GM12878 (cell line): ENCODE measurements at regions of chr10 and their contacts with region 1.

Region 1: DNA sequence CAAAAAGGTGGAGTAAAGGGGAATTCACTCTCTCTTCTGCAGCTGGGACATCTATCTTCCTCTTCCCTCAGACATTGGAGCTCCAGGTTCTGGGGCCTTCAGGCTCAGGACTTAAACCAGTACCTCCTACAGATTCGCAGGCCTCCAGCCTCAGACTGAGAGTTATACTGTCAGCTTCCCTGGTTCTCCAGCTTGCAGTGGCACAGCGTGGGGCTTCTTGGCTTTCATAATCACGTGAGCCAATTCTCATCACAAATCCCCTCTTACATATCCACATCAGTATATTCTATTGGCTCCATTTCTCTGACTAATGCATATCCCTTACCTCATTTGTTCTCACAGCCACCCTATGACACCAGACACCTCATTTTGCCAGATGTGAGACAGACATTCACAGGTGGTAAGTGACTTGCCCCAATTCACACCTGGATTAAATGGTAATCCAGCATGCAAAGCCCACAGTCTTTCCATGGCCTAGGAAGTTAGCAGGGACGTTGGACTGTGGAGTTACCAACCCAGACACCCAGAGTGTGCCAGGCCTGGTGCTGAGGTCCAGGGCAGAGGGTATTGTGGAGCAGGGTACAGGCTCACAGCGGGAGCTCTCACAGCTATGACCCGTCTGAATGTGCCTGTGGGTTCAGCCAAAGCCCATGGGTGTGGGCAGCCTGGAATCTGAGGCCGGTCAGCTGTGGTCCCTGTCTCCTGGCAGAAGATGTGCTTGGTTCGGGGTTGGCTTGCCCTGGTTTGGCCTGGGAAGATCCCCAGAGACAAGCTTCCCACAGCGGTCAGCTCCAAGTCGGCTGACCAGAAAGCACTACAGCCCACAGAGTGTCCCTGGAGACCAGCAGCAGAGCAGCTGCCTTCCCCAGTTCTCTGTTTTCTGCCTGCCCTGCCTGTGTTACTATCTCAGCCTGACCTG is 18.4 kb upstream of the ZCCHC24 start:
- DNase-seq: no peak
- ATAC-seq: peak; percentile 31; the same call in 1 of the 3 replicates
- H3K4me3 ChIP-seq: no peak overlapping the region
- H3K27ac ChIP-seq: no peak overlapping the region
- H3K4me1 ChIP-seq: no peaks in the 10 kb centered on the region
- H3K27me3 ChIP-seq: peaks cover 0 to 3% of the 10 kb centered on the region in 2 experiments; a peak in 2 of 4 replicates
- CTCF ChIP-seq: no peak
- EP300 ChIP-seq: no peak
- POLR2A ChIP-seq: no peak
- RAD21 ChIP-seq: no peak

Region 2: DNA sequence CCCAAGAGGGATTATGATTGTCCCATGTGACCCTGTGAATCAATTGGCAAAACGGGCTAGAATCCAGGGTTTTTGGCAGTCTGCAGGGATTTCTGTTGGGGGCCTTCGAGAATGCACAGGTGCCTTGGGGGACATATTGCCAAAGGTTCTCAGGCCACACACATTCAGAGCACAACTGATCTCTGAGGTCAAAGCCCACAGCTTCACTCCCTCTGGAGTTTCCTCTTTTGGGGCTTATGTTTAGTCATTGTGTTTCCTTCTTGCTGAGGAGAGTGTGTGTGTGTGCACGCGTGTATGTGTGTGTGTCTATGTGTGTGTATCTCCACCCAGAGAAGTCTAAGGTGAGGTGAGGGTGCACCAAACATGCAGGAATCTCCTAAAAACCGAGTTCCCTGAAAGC is 107.7 kb before region 1 on chr10:
- CTCF ChIA-PET with region 1: no interaction called
- POLR2A ChIA-PET with region 1: no interaction called
- RAD21 ChIA-PET with region 1: no interaction called
- SMC1A ChIA-PET with region 1: no interaction called
- in situ Hi-C with region 1: no loop called
- intact Hi-C with region 1: no loop called
- DNase-seq: no peak
- ATAC-seq: peak; percentile 33
- H3K4me3 ChIP-seq: no peak overlapping the region
- H3K27ac ChIP-seq: no peak overlapping the region
- H3K4me1 ChIP-seq: peaks cover 19% of the 10 kb centered on the region
- H3K27me3 ChIP-seq: no peaks in the 10 kb centered on the region
- CTCF ChIP-seq: no peak
- EP300 ChIP-seq: no peak
- POLR2A ChIP-seq: peak; percentile 30
- RAD21 ChIP-seq: no peak

Region 3: GRCh38 chr10:79390551-79391209 is 73.2 kb before region 1 on chr10:
- CTCF ChIA-PET with region 1: interaction called, 11 read pairs
- POLR2A ChIA-PET with region 1: no interaction called
- RAD21 ChIA-PET with region 1: no interaction called
- SMC1A ChIA-PET with region 1: interaction called, 3 read pairs
- in situ Hi-C with region 1: no loop called
- intact Hi-C with region 1: no loop called
- DNase-seq: no peak
- ATAC-seq: peak; percentile 13; the same call in 2 of the 3 replicates
- H3K4me3 ChIP-seq: no peak overlapping the region
- H3K27ac ChIP-seq: no peak overlapping the region
- H3K4me1 ChIP-seq: peaks cover 6% of the 10 kb centered on the region; the same call in 1 of the 2 replicates
- H3K27me3 ChIP-seq: no peaks in the 10 kb centered on the region; a peak in 1 of 4 replicates
- CTCF ChIP-seq: peak in 1 of 3 experiments; percentile 7; a peak in 1 of 6 replicates
- EP300 ChIP-seq: no peak
- POLR2A ChIP-seq: no peak
- RAD21 ChIP-seq: no peak

Region 4: GRCh38 chr10:79400146-79401004 is 63.5 kb before region 1 on chr10:
- CTCF ChIA-PET with region 1: interaction called, 5 read pairs
- POLR2A ChIA-PET with region 1: no interaction called
- RAD21 ChIA-PET with region 1: no interaction called
- SMC1A ChIA-PET with region 1: no interaction called
- in situ Hi-C with region 1: no loop called
- intact Hi-C with region 1: loop called (anchors 1 kb)
- DNase-seq: no peak
- ATAC-seq: peak; percentile 94
- H3K4me3 ChIP-seq: no peak overlapping the region
- H3K27ac ChIP-seq: no peak overlapping the region
- H3K4me1 ChIP-seq: no peaks in the 10 kb centered on the region
- H3K27me3 ChIP-seq: no peaks in the 10 kb centered on the region; a peak in 3 of 4 replicates
- CTCF ChIP-seq: peak; percentile 70 to 92 (median 75)
- EP300 ChIP-seq: no peak
- POLR2A ChIP-seq: no peak
- RAD21 ChIP-seq: peak; percentile 65